Activated CD8-positive, alpha-beta T cell treated with anti-CD3 and anti-CD28 coated beads for 36 hours (primary cell): ENCODE measurements at regions of chr11 and their contacts with region 1.

Region 1: DNA sequence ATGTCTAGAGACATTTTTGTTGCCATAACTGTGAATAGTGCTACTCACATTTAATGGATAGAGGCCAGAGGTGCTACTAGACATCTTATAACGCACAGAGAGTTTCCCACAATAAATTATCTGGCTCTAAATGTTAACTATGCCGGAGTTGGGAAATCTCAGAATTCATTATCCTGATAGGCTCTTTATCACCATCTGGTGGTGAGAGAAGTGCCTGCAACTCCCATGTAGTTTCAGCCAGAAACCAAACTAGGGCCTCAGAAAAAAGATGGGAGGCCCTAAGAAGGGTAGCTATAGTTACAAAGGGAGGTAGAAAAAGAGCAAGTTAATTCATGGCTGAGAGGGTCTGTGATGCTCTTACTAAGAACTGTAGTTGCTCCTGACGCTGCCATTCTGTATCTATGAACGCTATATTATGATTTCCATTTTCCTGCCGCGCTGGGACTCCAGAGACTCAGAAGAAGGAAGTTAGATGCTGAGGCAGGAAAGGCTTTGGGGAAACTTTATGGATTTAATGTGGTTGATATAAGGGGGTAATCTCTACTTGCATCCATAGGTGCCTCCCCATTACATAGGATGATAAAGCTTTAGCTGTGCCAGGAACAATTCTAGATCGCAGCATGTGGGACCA is 22.9 kb upstream of the MRPL17 start:
- DNase-seq: peak; percentile 64
- ATAC-seq: peak; percentile 88
- H3K4me3 Mint-ChIP-seq: no peak overlapping the region
- H3K27ac Mint-ChIP-seq: peak overlapping the region; percentile 59
- H3K4me1 Mint-ChIP-seq: peaks cover 19% of the 10 kb centered on the region
- H3K27me3 Mint-ChIP-seq: no peaks in the 10 kb centered on the region
- CTCF ChIP-seq: peak; percentile 85

Region 2: DNA sequence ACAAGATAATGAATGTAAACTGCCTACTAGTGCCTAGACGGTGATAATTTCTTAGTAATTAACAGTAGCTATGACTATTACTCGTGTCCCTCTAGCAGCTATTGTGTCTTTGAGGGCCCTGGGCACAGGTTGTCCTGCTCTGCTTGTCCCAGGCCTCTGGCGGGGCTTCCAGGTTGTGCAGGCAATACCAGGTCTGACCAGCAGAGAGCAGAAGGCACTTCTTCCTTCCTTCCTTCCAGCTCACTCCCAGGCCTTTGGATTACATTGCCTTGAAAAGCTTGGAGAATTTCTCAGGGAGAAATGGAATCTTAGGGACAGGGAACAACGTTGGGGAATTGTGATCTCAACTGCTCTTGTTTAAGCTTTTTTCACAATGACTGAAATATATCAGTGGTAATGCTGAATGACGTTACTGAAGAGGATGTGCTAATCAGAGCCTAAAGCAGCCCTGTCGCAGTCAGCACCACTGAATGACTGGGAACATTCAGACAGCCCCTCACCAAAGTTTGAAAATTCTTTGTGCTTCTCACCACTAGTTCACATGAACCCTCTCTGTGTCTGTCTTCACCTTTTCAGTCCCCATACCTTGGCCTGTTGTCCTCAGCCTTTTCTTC is 454.8 kb before region 1 on chr11:
- CTCF ChIA-PET with region 1: no interaction called
- POLR2A ChIA-PET with region 1: no interaction called
- intact Hi-C with region 1: no loop called
- DNase-seq: peak; percentile 73
- ATAC-seq: peak; percentile 96
- H3K4me3 Mint-ChIP-seq: no peak overlapping the region
- H3K27ac Mint-ChIP-seq: no peak overlapping the region
- H3K4me1 Mint-ChIP-seq: no peaks in the 10 kb centered on the region
- H3K27me3 Mint-ChIP-seq: no peaks in the 10 kb centered on the region
- CTCF ChIP-seq: peak; percentile 87

Region 3: DNA sequence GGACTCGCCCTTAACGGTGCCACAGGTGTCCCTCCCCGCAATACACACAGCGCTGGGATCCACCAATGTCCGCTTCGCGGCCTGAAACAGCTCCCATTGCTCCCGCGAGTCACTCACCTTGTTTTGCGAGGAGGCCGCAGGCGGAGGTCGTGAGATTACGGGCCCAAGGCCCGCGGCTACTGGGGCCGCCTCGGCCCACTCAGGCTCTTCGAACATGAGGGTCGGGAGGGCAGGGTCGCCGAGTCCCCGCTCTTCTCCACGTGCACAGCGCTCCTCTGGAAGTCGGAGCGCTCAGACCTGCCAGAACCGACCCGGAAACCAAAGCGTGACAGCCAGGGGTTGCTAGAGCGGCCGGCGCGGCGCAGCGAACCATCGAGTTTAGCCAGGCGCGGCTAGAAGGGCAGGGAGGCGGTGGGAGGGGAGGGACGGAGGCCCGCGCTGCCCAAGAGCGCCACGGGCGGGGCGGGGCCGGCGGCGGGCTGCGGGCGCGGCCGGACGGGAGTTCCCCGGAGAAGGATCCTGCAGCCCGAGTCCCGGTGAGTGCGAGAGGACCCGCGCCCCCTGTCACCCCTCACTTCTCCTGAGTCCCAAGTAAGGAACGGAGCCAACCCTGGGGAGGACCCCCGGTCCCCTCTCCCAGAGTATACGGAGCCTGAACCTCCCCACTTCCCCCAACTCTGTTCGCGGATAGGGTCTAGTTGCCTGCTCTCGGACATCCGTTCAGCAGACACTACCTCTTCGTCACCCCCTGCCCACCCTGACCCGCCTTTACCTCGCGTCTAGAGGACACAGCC is 102.5 kb before region 1 on chr11 and contains the starts of genes ILK and RRP8:
- CTCF ChIA-PET with region 1: interaction called, 11 read pairs
- POLR2A ChIA-PET with region 1: no interaction called
- intact Hi-C with region 1: no loop called
- DNase-seq: peak; percentile 90
- ATAC-seq: peak; percentile 81
- H3K4me3 Mint-ChIP-seq: no peak within 1 kb of the TSS
- H3K27ac Mint-ChIP-seq: no peak within 1 kb of the TSS
- H3K4me1 Mint-ChIP-seq: peaks cover 49% of the 10 kb centered on the region
- H3K27me3 Mint-ChIP-seq: no peaks in the 10 kb centered on the region
- CTCF ChIP-seq: no peak
- total RNA-seq, gene ILK: 70.6 to 71.7 TPM
- total RNA-seq, gene RRP8: 39.6 to 43.1 TPM

Region 4: DNA sequence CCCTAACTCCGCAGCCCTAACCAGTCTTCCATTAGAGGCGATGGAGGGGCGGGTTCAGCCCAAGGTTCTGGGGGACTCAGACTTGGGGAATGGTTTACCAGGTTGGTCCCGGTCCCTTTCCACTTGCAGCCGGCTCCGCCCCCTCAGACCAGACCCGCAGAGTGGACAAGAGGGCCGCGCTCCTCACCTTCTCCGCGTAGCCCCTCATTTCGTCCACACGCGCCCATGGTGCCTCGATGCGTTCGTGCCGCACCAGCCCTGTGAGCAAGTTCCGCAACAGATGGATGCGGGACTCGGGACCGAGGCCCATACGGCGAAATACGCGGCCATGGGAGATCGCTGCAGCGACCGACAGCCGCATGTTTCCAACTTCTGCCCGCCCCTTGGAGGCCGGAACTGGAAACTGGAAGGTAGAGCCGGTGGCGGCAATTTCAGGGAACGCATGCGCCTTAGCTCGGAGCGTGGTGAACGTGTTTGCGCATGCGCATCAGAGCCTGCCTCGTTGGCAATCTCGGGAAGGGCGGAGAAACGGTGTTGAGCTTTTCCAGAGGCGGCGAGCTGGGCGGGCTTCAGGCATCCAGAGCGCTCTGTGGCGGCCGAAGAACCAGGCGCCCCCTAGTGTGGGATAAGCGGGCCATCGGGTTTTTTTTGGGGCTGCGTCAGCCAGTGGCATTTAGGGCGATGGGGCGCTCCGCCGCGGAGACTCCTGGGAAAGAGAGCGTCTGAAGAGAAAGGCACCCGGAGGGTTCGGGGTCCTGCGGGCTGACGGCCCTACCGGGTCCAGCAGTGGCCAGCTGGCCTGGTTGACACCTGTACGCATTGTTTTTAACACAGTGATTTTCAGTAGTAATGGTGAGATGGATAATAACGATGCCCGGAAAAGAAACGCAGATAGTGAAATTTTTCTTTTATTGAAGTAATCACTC is 22.8 kb before region 1 on chr11 and contains the start of gene MRPL17:
- CTCF ChIA-PET with region 1: interaction called, 15 read pairs
- POLR2A ChIA-PET with region 1: no interaction called
- intact Hi-C with region 1: no loop called
- DNase-seq: peak; percentile 99
- ATAC-seq: peak; percentile 96
- H3K4me3 Mint-ChIP-seq: peak within 1 kb of the TSS; percentile 97
- H3K27ac Mint-ChIP-seq: peak within 1 kb of the TSS; percentile 98
- H3K4me1 Mint-ChIP-seq: peaks cover 28% of the 10 kb centered on the region
- H3K27me3 Mint-ChIP-seq: no peaks in the 10 kb centered on the region
- CTCF ChIP-seq: peak; percentile 79
- total RNA-seq, gene MRPL17: 140 to 144 TPM

Region 5: GRCh38 chr11:6719576-6719975 is 13.6 kb after region 1 on chr11:
- CTCF ChIA-PET with region 1: interaction called, 50 read pairs
- POLR2A ChIA-PET with region 1: interaction called, 4 read pairs
- intact Hi-C with region 1: no loop called
- DNase-seq: no peak
- ATAC-seq: no peak
- H3K4me3 Mint-ChIP-seq: no peak overlapping the region
- H3K27ac Mint-ChIP-seq: peak overlapping the region; percentile 65
- H3K4me1 Mint-ChIP-seq: peaks cover 77% of the 10 kb centered on the region
- H3K27me3 Mint-ChIP-seq: no peaks in the 10 kb centered on the region
- CTCF ChIP-seq: no peak

Region 6: GRCh38 chr11:6737872-6738466 is 31.9 kb after region 1 on chr11:
- CTCF ChIA-PET with region 1: interaction called, 21 read pairs
- POLR2A ChIA-PET with region 1: no interaction called
- intact Hi-C with region 1: no loop called
- DNase-seq: peak; percentile 86
- ATAC-seq: peak; percentile 57
- H3K4me3 Mint-ChIP-seq: no peak overlapping the region
- H3K27ac Mint-ChIP-seq: peak overlapping the region; percentile 78
- H3K4me1 Mint-ChIP-seq: peaks cover 84% of the 10 kb centered on the region
- H3K27me3 Mint-ChIP-seq: no peaks in the 10 kb centered on the region
- CTCF ChIP-seq: peak; percentile 72

Region 7: GRCh38 chr11:6757373-6757967 is 51.5 kb after region 1 on chr11:
- CTCF ChIA-PET with region 1: interaction called, 186 read pairs
- POLR2A ChIA-PET with region 1: no interaction called
- intact Hi-C with region 1: loop called (anchors 1 kb)
- DNase-seq: peak; percentile 82
- ATAC-seq: peak; percentile 84
- H3K4me3 Mint-ChIP-seq: no peak overlapping the region
- H3K27ac Mint-ChIP-seq: no peak overlapping the region
- H3K4me1 Mint-ChIP-seq: peaks cover 13% of the 10 kb centered on the region
- H3K27me3 Mint-ChIP-seq: peaks cover 5% of the 10 kb centered on the region
- CTCF ChIP-seq: peak; percentile 84

Region 8: DNA sequence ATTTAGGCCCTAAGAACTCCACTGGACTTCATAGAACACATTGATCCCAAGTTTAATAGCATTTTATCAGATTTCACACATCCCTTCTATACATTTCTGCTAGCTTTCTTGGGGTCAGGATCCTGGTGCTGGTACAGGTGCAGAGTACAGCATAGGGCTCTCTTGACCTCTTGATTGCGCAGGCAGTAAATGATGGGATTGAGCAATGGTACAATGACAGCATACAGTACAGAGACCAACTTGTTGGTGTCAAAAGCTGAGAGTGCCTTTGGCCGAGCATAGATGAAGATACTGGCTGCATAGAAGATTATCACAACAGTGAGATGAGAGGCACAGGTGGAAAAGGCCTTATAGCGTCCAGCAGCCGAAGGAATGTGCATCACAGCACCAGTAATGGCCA is 88.6 kb after region 1 on chr11:
- CTCF ChIA-PET with region 1: no interaction called
- POLR2A ChIA-PET with region 1: no interaction called
- intact Hi-C with region 1: no loop called
- DNase-seq: no peak
- ATAC-seq: no peak
- H3K4me3 Mint-ChIP-seq: no peak overlapping the region
- H3K27ac Mint-ChIP-seq: no peak overlapping the region
- H3K4me1 Mint-ChIP-seq: no peaks in the 10 kb centered on the region
- H3K27me3 Mint-ChIP-seq: peaks cover under 1% of the 10 kb centered on the region
- CTCF ChIP-seq: no peak